ENCODE measurements at regions of chr12 and their contacts with region 1.

Region 1: DNA sequence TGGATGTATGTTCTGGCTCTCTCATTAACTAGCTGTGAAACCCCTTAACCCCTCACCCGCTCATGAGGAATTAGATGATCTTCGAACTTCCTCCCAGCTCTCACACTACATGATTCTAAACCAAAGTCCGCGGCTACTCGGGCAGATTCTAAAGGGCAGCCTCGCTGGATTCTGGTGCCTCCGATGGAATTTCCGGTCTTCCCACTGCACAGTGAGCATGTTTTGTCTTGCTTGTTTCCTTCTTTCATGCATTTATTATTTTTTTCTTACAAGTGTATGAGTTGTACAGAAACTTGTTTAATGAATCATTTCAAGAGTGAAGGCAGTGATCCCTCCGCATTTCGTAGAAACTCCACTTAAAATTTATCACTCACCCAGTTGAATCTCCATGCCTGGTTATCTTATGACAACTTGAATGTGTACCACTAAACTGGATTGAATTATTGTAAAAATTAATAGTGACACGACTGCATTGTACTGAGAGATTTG is 4.5 kb upstream of the HCAR3 start:
- DNase-seq: no peak
- H3K4me3 Mint-ChIP-seq: no peak overlapping the region
- H3K27ac Mint-ChIP-seq: peak overlapping the region; percentile 83
- H3K4me1 Mint-ChIP-seq: peaks cover 32% of the 10 kb centered on the region
- H3K27me3 Mint-ChIP-seq: no peaks in the 10 kb centered on the region

Region 2: DNA sequence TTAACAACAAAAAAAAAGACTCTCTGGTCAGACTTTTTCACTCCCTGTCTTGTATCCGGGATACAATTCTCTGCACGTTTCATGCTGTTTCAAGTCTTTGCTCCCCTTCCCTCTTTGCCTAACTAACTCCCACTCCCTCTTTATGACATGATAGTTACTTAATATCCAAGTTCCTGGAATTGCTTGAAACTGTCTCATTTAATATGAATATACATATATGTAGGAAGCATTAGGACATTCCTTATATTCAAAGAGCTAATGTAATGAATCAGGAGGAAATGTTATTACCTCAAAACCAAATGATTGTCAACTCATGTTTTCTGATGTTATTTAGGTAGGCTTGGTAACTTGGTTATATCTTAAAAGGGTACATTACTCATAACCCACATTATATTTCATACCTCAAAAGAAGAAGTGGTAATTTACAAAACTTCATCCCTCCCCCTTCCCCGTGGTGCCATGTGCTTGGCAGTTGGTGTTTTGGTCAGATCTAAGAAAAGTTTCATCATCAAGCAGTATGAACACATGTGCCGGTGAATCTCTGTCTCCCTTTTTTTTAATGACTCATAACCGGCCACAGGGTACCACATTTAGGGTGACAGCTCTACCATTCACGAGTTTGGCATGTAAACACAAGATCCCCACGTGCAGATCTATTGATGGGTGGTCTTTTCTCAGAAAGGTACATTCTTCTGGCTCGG is 74.4 kb before region 1 on chr12:
- intact Hi-C with region 1: loop called (anchors 2 kb)
- DNase-seq: peak; percentile 39
- H3K4me3 Mint-ChIP-seq: peak overlapping the region; percentile 44
- H3K27ac Mint-ChIP-seq: peak overlapping the region; percentile 60
- H3K4me1 Mint-ChIP-seq: peaks cover 14% of the 10 kb centered on the region
- H3K27me3 Mint-ChIP-seq: no peaks in the 10 kb centered on the region

Region 3: DNA sequence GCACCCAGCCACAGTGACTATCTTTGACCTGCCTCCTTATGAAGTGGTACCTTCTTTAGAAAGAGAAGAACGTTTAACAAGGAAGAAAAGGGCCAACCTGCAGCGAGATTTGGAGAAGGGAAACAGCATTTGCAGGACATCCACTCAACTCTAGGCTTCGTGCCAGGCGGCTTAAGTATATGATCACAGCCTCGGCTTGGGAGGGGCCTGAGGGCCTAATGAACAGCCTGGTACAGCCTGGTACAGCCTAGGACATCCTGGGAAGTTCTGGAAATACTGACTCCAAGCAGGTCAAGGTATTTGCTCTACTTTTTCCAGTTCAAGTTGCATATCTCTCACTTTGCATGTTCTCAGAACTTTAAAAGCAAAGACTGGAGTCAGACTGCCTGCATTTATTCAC is 34.0 kb before region 1 on chr12:
- intact Hi-C with region 1: no loop called
- DNase-seq: no peak
- H3K4me3 Mint-ChIP-seq: no peak overlapping the region
- H3K27ac Mint-ChIP-seq: no peak overlapping the region
- H3K4me1 Mint-ChIP-seq: peaks cover 1% of the 10 kb centered on the region
- H3K27me3 Mint-ChIP-seq: no peaks in the 10 kb centered on the region

Region 4: DNA sequence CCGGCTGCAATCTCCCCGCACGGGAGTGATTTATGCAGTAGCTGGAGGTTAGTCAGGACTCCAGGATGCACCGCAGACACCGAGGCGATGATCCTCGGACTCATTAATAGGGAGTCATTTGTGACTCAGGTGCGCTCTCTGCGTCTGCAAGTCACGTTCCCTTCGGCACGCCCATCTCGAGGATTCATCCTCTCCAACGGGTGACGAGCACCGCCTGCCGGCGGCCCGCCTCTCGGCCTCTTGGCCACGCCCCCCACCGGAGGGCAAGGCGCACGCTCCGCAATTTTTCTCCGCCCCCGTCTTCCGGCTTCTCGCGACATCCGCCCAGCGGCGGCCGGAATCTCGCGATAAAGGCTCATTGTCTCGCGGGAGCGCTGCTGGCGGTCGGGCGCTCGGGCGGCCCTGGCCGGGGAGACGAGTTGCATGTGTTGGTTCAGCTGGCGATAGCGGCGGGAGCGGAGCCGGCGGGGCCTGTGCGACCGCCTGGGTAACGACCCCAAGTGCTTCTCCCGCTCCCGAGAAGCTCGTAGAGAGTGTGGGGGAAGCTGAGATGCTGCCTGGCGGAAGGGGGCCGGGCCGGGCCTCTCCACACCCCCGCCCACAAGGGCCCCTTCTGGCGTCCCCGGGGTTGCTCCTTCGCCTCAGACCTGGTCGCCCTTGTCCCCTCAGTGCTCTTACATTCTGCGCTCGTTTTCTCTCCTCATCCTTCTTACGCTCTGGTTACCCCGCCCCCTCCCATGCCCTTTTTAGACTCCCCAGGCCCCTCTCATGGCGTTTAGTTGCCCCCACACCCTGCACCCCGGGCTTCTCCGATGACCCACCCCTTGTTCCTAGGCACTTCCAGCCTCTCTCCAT is 31.6 kb after region 1 on chr12 and contains the start of gene DENR:
- intact Hi-C with region 1: loop called (anchors 1 kb)
- DNase-seq: peak; percentile 99
- H3K4me3 Mint-ChIP-seq: peak within 1 kb of the TSS; percentile 89
- H3K27ac Mint-ChIP-seq: peak within 1 kb of the TSS; percentile 90
- H3K4me1 Mint-ChIP-seq: peaks cover 42% of the 10 kb centered on the region
- H3K27me3 Mint-ChIP-seq: no peaks in the 10 kb centered on the region
- total RNA-seq, gene DENR: 76.7 and 79.6 TPM in 2 replicates

Region 5: GRCh38 chr12:123062681-123063486 is 341.8 kb after region 1 on chr12:
- intact Hi-C with region 1: no loop called
- DNase-seq: no peak
- H3K4me3 Mint-ChIP-seq: no peak overlapping the region
- H3K27ac Mint-ChIP-seq: peak overlapping the region; percentile 54
- H3K4me1 Mint-ChIP-seq: peaks cover 18% of the 10 kb centered on the region
- H3K27me3 Mint-ChIP-seq: no peaks in the 10 kb centered on the region